Right ventricle myocardium inferior (tissue), 1 donor: ENCODE measurements at regions of chr17 and their contacts with region 1.

Region 1: GRCh38 chr17:49227436-49228261 is 2.9 kb downstream of the PHOSPHO1 start:
- DNase-seq: peak; percentile 87
- ATAC-seq: peak; percentile 47

Region 2: GRCh38 chr17:49180998-49181635 is 46.5 kb before region 1 on chr17:
- intact Hi-C with region 1: loop called (anchors 1 kb)
- DNase-seq: no peak
- ATAC-seq: no peak

Region 3: GRCh38 chr17:49249292-49249794 is 21.7 kb after region 1 on chr17:
- intact Hi-C with region 1: no loop called
- DNase-seq: no peak
- ATAC-seq: peak; percentile 67